Psoas muscle (tissue), 8 donors: ENCODE measurements at regions of chr17 and their contacts with region 1.

Region 1: DNA sequence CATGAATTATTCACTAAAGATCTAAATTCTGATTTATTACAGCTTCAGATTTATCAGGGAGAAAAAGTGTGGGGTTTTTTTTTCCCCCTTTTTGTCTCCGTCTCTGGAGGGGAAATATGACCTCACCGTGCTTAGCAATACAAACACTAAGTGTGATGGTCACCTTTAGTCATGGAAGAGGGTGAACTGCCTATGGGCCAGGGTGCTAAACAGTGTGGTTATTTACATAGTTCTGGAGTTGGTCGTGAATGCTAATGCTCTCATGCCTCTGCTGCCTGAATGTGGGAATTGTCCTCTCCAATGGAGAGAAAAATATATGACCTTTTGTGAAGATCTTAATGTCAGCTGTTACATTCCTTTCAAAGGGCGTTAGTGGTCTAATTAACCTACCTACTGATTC is 44.8 kb upstream of the MSI2 start:
- DNase-seq: no peak
- ATAC-seq: no peak
- H3K4me3 ChIP-seq: no peak overlapping the region
- H3K27ac ChIP-seq: no peak overlapping the region
- H3K4me1 ChIP-seq: no peaks in the 10 kb centered on the region
- H3K27me3 ChIP-seq: no peaks in the 10 kb centered on the region
- CTCF ChIP-seq: no peak

Region 2: DNA sequence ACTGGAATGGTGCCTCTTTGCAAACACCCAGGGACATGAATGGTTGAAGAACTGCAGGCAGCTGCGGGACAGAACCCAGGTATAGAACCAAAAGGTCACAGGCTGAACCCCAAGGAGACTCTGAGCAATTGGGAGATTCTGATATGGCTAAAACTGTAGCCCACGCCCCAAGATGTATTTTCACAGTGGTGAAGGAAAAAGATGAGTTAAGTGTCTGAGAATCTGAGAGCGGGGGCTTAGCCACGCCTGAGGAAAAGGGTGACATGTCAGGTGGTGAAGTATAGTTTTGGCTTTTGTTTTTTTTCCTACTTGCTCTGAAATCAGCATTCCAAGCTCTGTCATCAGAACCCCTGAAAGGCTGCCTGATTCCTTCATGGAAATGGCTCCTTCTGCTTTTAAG is 53.2 kb before region 1 on chr17:
- intact Hi-C with region 1: loop called in 1 of 2 experiments (anchors 10 kb)
- DNase-seq: no peak
- ATAC-seq: no peak
- H3K4me3 ChIP-seq: no peak overlapping the region
- H3K27ac ChIP-seq: no peak overlapping the region
- H3K4me1 ChIP-seq: no peaks in the 10 kb centered on the region
- H3K27me3 ChIP-seq: no peaks in the 10 kb centered on the region
- CTCF ChIP-seq: no peak

Region 3: GRCh38 chr17:57444682-57445435 is 233.3 kb after region 1 on chr17:
- intact Hi-C with region 1: no loop called
- DNase-seq: no peak
- ATAC-seq: no peak
- H3K4me3 ChIP-seq: no peak overlapping the region
- H3K27ac ChIP-seq: peak overlapping the region; percentile 92
- H3K4me1 ChIP-seq: peaks cover 47% of the 10 kb centered on the region
- H3K27me3 ChIP-seq: no peaks in the 10 kb centered on the region
- CTCF ChIP-seq: no peak